ENCODE measurements at regions of chr7 and their contacts with region 1.

Region 1: GRCh38 chr7:48976253-48976652 is 51.9 kb downstream of the CDC14C start:
- DNase-seq: no peak
- H3K4me3 ChIP-seq: no peak overlapping the region
- CTCF ChIP-seq: no peak
- POLR2A ChIP-seq: no peak

Region 2: DNA sequence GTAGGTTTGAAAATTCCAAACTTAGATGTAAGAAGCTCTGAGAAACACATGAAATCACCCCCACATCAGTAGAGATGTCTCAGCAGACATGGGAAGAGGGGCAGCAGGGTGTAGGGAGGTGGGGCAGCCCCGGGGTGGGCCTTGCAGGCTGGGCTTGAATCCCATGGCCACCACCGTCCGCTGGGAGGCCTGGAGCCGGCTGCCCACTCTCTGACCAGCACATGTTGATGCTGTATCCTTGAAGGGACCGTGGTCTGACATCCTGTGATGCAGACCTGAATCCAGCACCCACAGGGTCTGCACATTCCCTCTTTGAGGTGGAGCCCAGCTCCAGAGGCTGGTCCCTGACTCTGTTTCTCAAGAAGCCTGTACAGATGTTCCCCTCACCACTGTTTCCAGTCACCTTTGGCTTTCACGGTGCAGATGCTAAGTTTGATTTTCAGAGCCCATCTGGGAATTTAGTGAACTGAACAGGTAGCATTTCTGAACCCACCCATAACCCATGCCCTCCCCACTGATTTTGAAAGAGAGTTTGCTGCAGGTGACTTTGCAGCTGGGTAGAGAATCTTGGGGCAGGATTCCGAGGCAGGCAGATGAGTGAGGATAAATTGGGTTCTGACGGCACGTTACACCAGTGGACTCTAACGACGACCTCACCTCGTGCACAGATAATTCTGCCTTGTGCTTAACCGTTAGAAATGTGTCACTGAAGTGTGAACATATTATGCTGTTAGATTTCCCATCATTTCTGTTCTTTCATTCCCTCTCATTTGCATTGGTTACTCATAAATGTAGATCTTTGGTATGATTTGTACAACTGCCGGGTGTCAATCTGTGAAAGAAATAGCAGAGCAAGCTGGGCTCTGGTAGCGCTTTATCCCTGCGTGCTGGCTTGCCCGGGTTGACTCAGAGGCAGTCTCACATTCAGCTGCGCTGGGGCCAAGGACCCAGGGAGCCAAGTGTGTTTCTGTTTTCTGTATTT is 1374.0 kb after region 1 on chr7:
- intact Hi-C with region 1: loop called (anchors 5 kb)
- DNase-seq: no peak
- H3K4me3 ChIP-seq: no peak overlapping the region
- CTCF ChIP-seq: no peak
- POLR2A ChIP-seq: no peak

Measured in lower leg skin (tissue), 4 donors.